Calu3 (cell line): ENCODE measurements at regions of chr10 and their contacts with region 1.

Region 1: GRCh38 chr10:90912174-90912573 is 8.7 kb downstream of the ANKRD1 start:
- DNase-seq: no peak
- H3K4me3 Mint-ChIP-seq: no peak overlapping the region
- H3K27ac Mint-ChIP-seq: no peak overlapping the region
- H3K4me1 Mint-ChIP-seq: no peaks in the 10 kb centered on the region
- H3K27me3 Mint-ChIP-seq: no peaks in the 10 kb centered on the region
- CTCF ChIP-seq: no peak

Region 2: DNA sequence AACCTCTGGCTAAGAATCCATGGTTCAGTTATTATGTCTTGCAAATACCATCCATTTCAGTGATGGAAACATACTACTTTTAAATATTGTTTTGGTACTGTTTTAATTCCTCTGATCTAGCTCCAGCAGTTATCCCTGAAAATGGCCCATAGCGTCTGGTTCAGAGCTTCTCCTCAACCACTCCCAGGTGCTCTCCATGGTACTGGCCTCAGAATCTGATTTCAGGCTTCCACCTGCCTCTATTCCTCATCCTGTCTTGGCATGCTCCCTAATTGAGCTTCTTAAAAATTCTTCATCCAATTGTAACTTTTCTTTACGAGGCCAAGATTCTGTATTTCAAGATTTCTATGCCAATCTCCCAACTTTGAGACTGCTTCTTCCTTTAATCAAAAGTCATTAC is 290.6 kb before region 1 on chr10:
- CTCF ChIA-PET with region 1: no interaction called
- intact Hi-C with region 1: no loop called
- DNase-seq: peak; percentile 1
- H3K4me3 Mint-ChIP-seq: no peak overlapping the region
- H3K27ac Mint-ChIP-seq: no peak overlapping the region
- H3K4me1 Mint-ChIP-seq: no peaks in the 10 kb centered on the region
- H3K27me3 Mint-ChIP-seq: peaks cover 23% of the 10 kb centered on the region
- CTCF ChIP-seq: no peak

Region 3: GRCh38 chr10:90969947-90970684 is 57.9 kb after region 1 on chr10:
- CTCF ChIA-PET with region 1: no interaction called
- intact Hi-C with region 1: loop called (anchors 5 kb)
- DNase-seq: no peak
- H3K4me3 Mint-ChIP-seq: no peak overlapping the region
- H3K27ac Mint-ChIP-seq: no peak overlapping the region
- H3K4me1 Mint-ChIP-seq: no peaks in the 10 kb centered on the region
- H3K27me3 Mint-ChIP-seq: no peaks in the 10 kb centered on the region
- CTCF ChIP-seq: no peak

Region 4: DNA sequence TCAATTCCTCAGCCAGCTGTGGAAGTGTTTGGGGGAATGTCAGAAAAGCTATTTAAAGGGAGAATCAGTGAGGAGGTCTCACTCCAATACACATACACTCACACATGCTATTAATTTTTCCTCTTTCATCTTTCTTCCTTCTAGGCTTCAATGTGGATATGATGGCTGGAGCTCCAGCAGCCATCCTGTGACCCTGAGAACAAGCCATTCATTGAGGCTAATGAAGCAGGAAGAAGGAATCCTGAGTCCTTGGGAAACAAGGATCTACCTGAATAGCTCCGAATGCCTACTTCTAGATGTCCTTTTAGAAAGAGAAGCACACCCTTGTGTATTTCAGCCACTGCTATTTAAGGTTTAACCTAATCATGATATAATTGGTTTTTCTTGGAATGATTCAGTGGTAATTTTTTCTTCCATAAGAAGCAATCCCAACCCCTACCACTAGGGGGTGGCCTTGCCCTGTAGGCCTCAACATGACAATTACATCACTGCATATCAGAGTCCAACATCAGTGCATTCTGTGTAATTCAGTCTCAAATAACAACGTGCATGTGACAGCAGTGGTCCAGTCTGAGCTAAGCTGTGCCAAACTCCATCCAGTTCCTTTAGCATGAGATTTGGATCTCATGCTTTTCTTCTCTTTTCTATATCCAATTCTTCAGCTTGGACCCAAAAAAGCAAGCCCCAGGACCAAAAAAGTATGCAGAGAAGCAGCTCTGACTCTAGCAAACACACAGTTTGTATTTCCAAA is 94.0 kb after region 1 on chr10:
- CTCF ChIA-PET with region 1: interaction called, 3 read pairs
- intact Hi-C with region 1: loop called (anchors 10 kb)
- DNase-seq: peak; percentile 66
- H3K4me3 Mint-ChIP-seq: no peak overlapping the region
- H3K27ac Mint-ChIP-seq: no peak overlapping the region
- H3K4me1 Mint-ChIP-seq: peaks cover 9% of the 10 kb centered on the region
- H3K27me3 Mint-ChIP-seq: no peaks in the 10 kb centered on the region
- CTCF ChIP-seq: peak; percentile 68

Region 5: DNA sequence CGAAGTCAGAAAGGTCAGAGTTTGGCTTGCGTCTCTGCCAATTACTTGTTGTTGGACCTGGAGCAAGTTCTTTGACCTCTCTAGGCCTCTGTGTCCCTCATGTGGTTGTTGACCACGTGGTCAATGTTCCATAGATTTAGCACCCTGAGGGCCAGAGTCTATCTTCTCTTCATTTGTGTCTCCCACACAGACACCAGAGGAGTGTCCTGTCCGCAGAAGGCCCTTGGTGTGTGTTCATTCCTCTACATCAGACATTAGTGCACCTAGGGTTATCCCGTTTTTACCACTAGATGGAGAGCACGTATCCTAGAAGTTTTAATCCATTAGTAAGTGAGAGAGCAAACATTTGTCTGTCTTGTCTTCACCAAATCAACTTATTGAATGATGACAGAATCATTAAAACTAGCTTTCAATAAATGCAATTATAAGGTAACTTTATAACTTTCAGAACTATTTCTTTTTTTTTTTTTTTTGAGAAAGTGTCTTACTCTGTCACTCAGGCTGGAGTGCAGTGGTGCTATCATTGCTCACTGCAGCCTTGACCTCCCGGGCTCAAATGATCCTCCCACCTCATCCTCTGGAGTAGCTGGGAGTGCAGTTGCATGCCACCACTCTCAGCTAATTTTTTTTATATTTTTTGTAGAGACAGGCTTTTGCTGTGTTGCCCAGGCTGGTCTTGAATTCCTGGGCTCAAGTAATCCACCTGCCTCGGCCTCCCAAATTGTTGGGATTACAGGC is 131.2 kb after region 1 on chr10:
- CTCF ChIA-PET with region 1: no interaction called
- intact Hi-C with region 1: loop called (anchors 10 kb)
- DNase-seq: peak; percentile 1
- H3K4me3 Mint-ChIP-seq: no peak overlapping the region
- H3K27ac Mint-ChIP-seq: no peak overlapping the region
- H3K4me1 Mint-ChIP-seq: no peaks in the 10 kb centered on the region
- H3K27me3 Mint-ChIP-seq: peaks cover 45% of the 10 kb centered on the region
- CTCF ChIP-seq: peak; percentile 29

Region 6: DNA sequence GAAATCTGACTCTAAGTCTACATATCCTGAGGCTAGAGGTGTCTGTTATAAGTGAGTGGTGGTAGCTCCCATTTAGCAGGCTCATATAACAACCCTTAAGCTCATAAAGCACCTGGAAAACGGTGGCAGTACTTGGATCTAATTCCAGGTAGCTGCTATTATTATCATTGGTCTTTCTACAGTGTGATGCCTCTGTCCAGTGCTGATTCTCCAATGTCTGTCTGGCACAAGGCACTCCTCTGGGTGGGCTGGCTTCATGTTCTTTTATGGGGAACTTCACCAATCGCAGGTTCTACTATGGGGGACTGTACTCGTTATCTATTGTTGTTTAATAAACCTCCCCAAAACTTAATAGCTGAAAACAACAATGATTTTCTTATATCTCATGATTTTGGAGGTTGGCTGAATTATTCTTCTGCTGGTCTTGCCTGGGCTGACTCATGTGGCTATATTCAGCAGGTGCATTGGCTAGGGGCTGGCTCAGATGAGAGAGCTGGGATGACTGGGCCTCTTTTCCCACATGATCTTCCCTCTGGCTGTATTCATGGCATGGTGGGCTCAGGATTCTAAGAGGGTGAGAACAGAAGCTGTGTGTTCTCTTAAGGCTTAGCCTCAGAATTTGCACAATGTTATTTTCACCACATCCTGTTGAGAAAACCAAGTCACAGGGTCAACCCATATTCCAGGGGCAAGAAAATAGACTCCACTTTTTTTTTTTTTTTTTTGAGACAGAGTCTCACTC is 215.3 kb after region 1 on chr10:
- CTCF ChIA-PET with region 1: no interaction called
- intact Hi-C with region 1: no loop called
- DNase-seq: no peak
- H3K4me3 Mint-ChIP-seq: no peak overlapping the region
- H3K27ac Mint-ChIP-seq: no peak overlapping the region
- H3K4me1 Mint-ChIP-seq: no peaks in the 10 kb centered on the region
- H3K27me3 Mint-ChIP-seq: peaks cover 49% of the 10 kb centered on the region
- CTCF ChIP-seq: no peak